PC-9 (cell line): ENCODE measurements at regions of chr10 and their contacts with region 1.

Region 1: DNA sequence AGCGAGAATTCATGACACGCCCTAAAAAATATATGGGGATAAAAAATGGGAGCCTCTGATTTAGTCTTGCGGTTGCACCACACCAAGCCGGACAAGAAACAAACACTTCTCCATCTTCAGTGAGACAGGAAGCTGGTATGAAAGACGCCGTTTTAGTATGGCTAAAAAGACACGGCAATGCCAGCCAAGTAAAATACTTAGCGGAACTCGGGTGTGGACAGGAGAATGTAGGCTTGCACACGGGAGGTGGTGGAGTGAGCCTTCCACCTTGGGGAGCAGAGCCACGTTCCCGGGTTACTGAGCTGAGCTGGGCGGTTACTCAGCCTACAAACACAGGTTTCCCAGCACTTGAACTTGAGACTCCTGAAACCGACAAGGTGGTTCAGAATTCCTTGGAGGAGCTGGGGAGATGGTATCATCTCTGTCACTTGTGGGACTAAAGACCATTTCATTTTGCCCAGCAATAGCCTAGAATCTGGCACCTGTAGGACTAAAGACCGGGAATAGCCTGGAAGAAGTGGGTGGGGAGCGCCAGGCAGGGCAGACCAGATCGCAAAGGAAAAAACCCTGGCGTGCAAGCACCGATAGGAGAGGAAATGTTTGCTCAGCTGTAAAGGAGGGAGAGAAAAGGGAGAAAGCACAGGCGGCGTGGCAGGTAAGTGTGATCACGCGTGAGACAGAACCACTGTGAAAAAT is 34.8 kb upstream of the SEPHS1 start:
- DNase-seq: peak in 1 of 2 experiments; percentile 39
- H3K4me3 ChIP-seq: peak overlapping the region; percentile 50
- H3K27ac ChIP-seq: peak overlapping the region; percentile 49
- H3K4me1 ChIP-seq: no peaks in the 10 kb centered on the region
- H3K27me3 ChIP-seq: peaks cover 11% of the 10 kb centered on the region
- CTCF ChIP-seq: no peak

Region 2: GRCh38 chr10:12729885-12730284 is 653.0 kb before region 1 on chr10:
- CTCF ChIA-PET with region 1: no interaction called
- POLR2A ChIA-PET with region 1: no interaction called
- intact Hi-C with region 1: no loop called
- DNase-seq: no peak
- H3K4me3 ChIP-seq: no peak overlapping the region
- H3K27ac ChIP-seq: no peak overlapping the region
- H3K4me1 ChIP-seq: peaks cover 11% of the 10 kb centered on the region; the same call in 1 of the 2 replicates
- H3K27me3 ChIP-seq: no peaks in the 10 kb centered on the region
- CTCF ChIP-seq: no peak

Region 3: GRCh38 chr10:13365243-13365642 is 17.6 kb before region 1 on chr10:
- CTCF ChIA-PET with region 1: no interaction called
- POLR2A ChIA-PET with region 1: no interaction called
- intact Hi-C with region 1: no loop called
- DNase-seq: no peak
- H3K4me3 ChIP-seq: no peak overlapping the region
- H3K27ac ChIP-seq: no peak overlapping the region
- H3K4me1 ChIP-seq: no peaks in the 10 kb centered on the region
- H3K27me3 ChIP-seq: peaks cover 4% of the 10 kb centered on the region; the same call in 1 of the 2 replicates
- CTCF ChIP-seq: no peak

Region 4: DNA sequence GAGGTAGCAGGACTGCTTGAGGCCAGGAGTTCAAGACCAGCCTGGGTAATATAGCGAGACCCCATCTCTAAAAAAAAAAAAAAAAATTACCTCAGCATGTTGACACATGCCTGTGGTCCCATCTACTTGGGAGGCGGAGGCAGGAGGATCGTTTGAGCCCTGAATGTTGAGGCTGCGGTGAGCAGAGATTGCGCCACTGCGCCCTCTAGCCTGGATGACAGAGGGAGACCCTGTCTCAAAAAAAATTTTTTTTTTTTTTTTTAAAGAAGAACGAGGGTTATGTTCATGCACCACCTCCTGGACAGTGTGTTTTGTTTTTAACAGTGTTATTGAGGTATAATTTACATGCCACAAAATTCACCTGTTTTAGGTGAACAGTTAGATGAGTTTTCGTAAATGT is 16.4 kb after region 1 on chr10:
- CTCF ChIA-PET with region 1: no interaction called
- POLR2A ChIA-PET with region 1: no interaction called
- intact Hi-C with region 1: no loop called
- DNase-seq: no peak
- H3K4me3 ChIP-seq: no peak overlapping the region
- H3K27ac ChIP-seq: no peak overlapping the region
- H3K4me1 ChIP-seq: no peaks in the 10 kb centered on the region
- H3K27me3 ChIP-seq: peaks cover 6% of the 10 kb centered on the region; the same call in 1 of the 2 replicates
- CTCF ChIP-seq: no peak

Region 5: DNA sequence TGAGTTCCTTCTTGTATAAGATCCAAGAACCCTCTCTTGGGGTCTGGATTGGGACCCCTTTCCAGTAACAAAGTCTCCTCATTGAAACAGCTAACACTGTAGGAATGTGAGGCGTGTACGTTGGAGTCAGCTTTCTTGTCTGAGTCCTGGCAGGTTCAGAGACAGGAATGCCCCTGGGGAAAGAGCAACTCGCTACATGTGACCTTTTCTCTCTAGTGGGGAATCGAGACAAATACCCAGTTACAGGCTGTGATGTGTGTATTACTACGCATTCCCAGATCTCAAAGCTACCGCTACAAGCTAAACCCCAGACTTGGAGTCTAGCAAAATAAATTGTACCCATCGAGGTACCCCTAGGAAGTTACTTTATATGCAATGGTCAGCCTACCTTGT is 1033.5 kb after region 1 on chr10:
- CTCF ChIA-PET with region 1: no interaction called
- POLR2A ChIA-PET with region 1: interaction called, 10 read pairs
- intact Hi-C with region 1: no loop called
- DNase-seq: peak in 1 of 2 experiments; percentile 44
- H3K4me3 ChIP-seq: no peak overlapping the region
- H3K27ac ChIP-seq: no peak overlapping the region
- H3K4me1 ChIP-seq: no peaks in the 10 kb centered on the region
- H3K27me3 ChIP-seq: 0 out of 2 replicates have a peak, but pooled peaks cover under 1% of the 10 kb centered on the region
- CTCF ChIP-seq: no peak